ENCODE measurements at regions of chr17 and their contacts with region 1.

Region 1: GRCh38 chr17:8740486-8740885 is 4.2 kb downstream of the CCDC42 start:
- DNase-seq: no peak
- ATAC-seq: no peak

Region 2: GRCh38 chr17:8409966-8410864 is 330.3 kb before region 1 on chr17:
- intact Hi-C with region 1: loop called (anchors 5 kb)
- DNase-seq: peak; percentile 97
- ATAC-seq: peak; percentile 94